Activated CD8-positive, alpha-beta T cell treated with anti-CD3 and anti-CD28 coated beads for 36 hours (primary cell): ENCODE measurements at regions of chr12 and their contacts with region 1.

Region 1: GRCh38 chr12:120194534-120195395 is at the start of gene GCN1:
- DNase-seq: peak; percentile 85
- ATAC-seq: peak; percentile 81
- H3K4me3 Mint-ChIP-seq: peak within 1 kb of the TSS; percentile 93
- H3K27ac Mint-ChIP-seq: peak within 1 kb of the TSS; percentile 91
- H3K4me1 Mint-ChIP-seq: peaks cover 57% of the 10 kb centered on the region
- H3K27me3 Mint-ChIP-seq: no peaks in the 10 kb centered on the region
- CTCF ChIP-seq: no peak
- total RNA-seq, gene GCN1: 130 to 137 TPM

Region 2: GRCh38 chr12:119988782-119989668 is 205.7 kb before region 1 on chr12 and contains the start of gene BICDL1:
- CTCF ChIA-PET with region 1: no interaction called
- POLR2A ChIA-PET with region 1: interaction called, 12 read pairs
- intact Hi-C with region 1: no loop called
- DNase-seq: peak; percentile 98
- ATAC-seq: peak; percentile 89
- H3K4me3 Mint-ChIP-seq: peak within 1 kb of the TSS; percentile 89
- H3K27ac Mint-ChIP-seq: peak within 1 kb of the TSS; percentile 90
- H3K4me1 Mint-ChIP-seq: peaks cover 40% of the 10 kb centered on the region
- H3K27me3 Mint-ChIP-seq: no peaks in the 10 kb centered on the region
- CTCF ChIP-seq: no peak
- total RNA-seq, gene BICDL1: 103 to 107 TPM

Region 3: GRCh38 chr12:120126635-120127005 is 68.1 kb before region 1 on chr12:
- CTCF ChIA-PET with region 1: interaction called, 3 read pairs
- POLR2A ChIA-PET with region 1: interaction called, 60 read pairs
- intact Hi-C with region 1: loop called (anchors 5 kb)
- DNase-seq: no peak
- ATAC-seq: no peak
- H3K4me3 Mint-ChIP-seq: no peak overlapping the region
- H3K27ac Mint-ChIP-seq: peak overlapping the region; percentile 84
- H3K4me1 Mint-ChIP-seq: peaks cover 50% of the 10 kb centered on the region
- H3K27me3 Mint-ChIP-seq: no peaks in the 10 kb centered on the region
- CTCF ChIP-seq: no peak

Region 4: DNA sequence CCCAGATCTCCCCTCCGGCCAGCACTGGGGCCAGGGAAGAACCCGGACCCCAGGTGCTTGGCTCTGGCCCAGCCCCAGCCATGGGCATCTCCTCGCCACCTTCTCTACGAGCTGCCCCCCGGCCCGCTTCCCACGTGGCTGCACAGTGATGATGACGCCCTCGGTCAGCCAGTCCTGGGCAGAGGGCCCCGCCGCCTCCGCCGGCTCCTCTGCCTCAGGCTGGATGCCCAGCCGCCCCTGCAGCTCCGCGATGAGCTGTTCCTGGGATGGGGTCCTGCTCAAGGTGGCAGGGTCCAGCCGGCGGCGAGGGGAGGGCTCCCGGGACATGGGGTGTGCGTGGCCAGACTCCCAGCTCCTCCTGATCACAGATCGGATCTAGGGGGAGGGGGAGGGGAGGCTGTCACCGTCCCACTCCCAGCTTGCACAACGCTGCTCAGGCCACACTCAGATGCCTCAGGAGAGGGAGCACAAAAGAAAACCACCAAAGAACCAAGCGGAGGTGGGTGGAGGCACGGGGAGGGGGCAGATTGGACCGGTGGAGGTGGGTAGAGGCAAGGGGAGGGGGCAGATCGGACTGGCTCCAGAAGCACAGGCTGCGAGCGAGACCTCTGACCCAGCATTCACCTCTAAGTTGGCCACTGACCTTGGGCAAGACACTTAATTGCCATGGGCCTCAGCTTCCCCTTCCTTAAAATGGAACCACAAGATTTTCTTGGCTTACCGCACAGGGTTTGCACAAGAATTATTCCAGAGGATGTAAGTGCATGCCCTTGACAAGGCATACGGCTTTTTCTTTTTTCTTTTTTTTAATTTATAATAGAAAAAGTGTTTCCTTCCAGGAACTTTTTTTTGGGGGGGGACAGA is 22.2 kb after region 1 on chr12:
- CTCF ChIA-PET with region 1: no interaction called
- POLR2A ChIA-PET with region 1: interaction called, 53 read pairs
- intact Hi-C with region 1: no loop called
- DNase-seq: no peak
- ATAC-seq: no peak
- H3K4me3 Mint-ChIP-seq: no peak overlapping the region
- H3K27ac Mint-ChIP-seq: no peak overlapping the region
- H3K4me1 Mint-ChIP-seq: no peaks in the 10 kb centered on the region
- H3K27me3 Mint-ChIP-seq: no peaks in the 10 kb centered on the region
- CTCF ChIP-seq: no peak

Region 5: GRCh38 chr12:120249875-120250795 is 55.4 kb after region 1 on chr12:
- CTCF ChIA-PET with region 1: no interaction called
- POLR2A ChIA-PET with region 1: interaction called, 33 read pairs
- intact Hi-C with region 1: no loop called
- DNase-seq: peak; percentile 75
- ATAC-seq: peak; percentile 8
- H3K4me3 Mint-ChIP-seq: peak overlapping the region; percentile 6
- H3K27ac Mint-ChIP-seq: peak overlapping the region; percentile 34
- H3K4me1 Mint-ChIP-seq: peaks cover 75% of the 10 kb centered on the region
- H3K27me3 Mint-ChIP-seq: no peaks in the 10 kb centered on the region
- CTCF ChIP-seq: no peak

Region 6: GRCh38 chr12:120292661-120293531 is 98.1 kb after region 1 on chr12 and contains the start of gene RNU4-1:
- CTCF ChIA-PET with region 1: no interaction called
- POLR2A ChIA-PET with region 1: interaction called, 263 read pairs
- intact Hi-C with region 1: no loop called
- DNase-seq: peak; percentile 90
- ATAC-seq: peak; percentile 68
- H3K4me3 Mint-ChIP-seq: no peak within 1 kb of the TSS
- H3K27ac Mint-ChIP-seq: no peak within 1 kb of the TSS
- H3K4me1 Mint-ChIP-seq: peaks cover 10% of the 10 kb centered on the region
- H3K27me3 Mint-ChIP-seq: no peaks in the 10 kb centered on the region
- CTCF ChIP-seq: no peak
- total RNA-seq, gene RNU4-1: 692 to 1,025 TPM